Activated T-helper 1 cell treated with anti-CD3 and anti-CD28 coated beads, Interleukin-12 subunit alpha, Interleukin-12 subunit beta, Interleukin-2, Interleukin-4 antibody, amounts not matched to agents 30 ng/mL and 10 ng/mL and 1 ng/mL, durations not matched to agents 14 hours and 24 hours and 36 hours (primary cell): ENCODE measurements at regions of chr15 and their contacts with region 1.

Region 1: GRCh38 chr15:70512772-70513362 is 250.5 kb downstream of the UACA start:
- DNase-seq: peak; percentile 63
- H3K4me3 Mint-ChIP-seq: no peak overlapping the region
- H3K27ac Mint-ChIP-seq: no peak overlapping the region
- H3K4me1 Mint-ChIP-seq: peaks cover 23% of the 10 kb centered on the region
- H3K27me3 Mint-ChIP-seq: peaks cover 30% of the 10 kb centered on the region

Region 2: GRCh38 chr15:69475769-69476358 is 1037.0 kb before region 1 on chr15:
- intact Hi-C with region 1: loop called (anchors 5 kb)
- DNase-seq: peak; percentile 55
- H3K4me3 Mint-ChIP-seq: no peak overlapping the region
- H3K27ac Mint-ChIP-seq: no peak overlapping the region
- H3K4me1 Mint-ChIP-seq: no peaks in the 10 kb centered on the region
- H3K27me3 Mint-ChIP-seq: peaks cover 23% of the 10 kb centered on the region

Region 3: GRCh38 chr15:69523010-69524001 is 989.6 kb before region 1 on chr15:
- intact Hi-C with region 1: loop called (anchors 2 kb)
- DNase-seq: peak; percentile 49
- H3K4me3 Mint-ChIP-seq: no peak overlapping the region
- H3K27ac Mint-ChIP-seq: no peak overlapping the region
- H3K4me1 Mint-ChIP-seq: peaks cover 6% of the 10 kb centered on the region
- H3K27me3 Mint-ChIP-seq: peaks cover 16% of the 10 kb centered on the region

Region 4: DNA sequence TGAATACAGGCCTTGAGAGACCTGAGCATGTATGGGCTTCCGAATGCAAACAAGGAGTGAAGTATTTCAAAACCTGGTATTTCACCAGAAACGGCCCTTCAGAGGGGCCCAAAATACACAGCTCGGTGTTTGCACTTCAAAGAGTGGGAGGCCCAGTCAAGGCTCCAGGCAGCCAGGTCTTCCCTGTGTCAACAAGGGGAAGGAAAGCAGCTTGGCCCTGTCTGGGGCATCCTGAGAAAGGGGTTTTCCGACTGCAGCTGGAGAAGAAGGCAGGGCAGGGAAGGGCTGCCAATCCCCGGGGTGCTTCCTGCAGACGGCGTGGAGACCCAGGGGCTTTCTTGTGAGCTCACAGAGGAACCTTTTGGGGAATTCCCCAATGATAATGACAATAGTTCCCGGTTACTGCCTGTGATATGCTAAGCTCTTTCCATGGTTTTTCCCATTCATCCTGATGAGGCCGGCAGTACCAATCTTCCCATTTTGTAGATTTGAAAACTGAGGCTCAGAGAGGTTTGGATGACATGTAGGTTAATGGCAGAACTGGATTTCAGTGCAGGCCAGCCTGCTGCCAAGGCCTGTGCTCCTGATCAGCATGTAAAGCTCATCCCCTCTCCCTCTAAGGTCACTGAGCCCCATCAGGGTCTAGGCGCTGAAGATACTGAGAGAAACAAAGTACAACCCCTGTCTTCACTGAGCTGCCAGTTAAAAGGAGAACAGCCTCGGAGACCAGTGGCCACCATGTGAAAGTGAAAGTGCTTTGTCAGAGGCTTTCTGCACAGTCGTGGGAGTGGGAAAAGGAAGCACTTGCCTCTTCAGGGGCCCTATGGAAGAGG is 372.1 kb before region 1 on chr15:
- intact Hi-C with region 1: loop called (anchors 2 kb)
- DNase-seq: peak; percentile 8
- H3K4me3 Mint-ChIP-seq: peak overlapping the region; percentile 54
- H3K27ac Mint-ChIP-seq: peak overlapping the region; percentile 53
- H3K4me1 Mint-ChIP-seq: peaks cover 33% of the 10 kb centered on the region
- H3K27me3 Mint-ChIP-seq: peaks cover 28% of the 10 kb centered on the region

Region 5: DNA sequence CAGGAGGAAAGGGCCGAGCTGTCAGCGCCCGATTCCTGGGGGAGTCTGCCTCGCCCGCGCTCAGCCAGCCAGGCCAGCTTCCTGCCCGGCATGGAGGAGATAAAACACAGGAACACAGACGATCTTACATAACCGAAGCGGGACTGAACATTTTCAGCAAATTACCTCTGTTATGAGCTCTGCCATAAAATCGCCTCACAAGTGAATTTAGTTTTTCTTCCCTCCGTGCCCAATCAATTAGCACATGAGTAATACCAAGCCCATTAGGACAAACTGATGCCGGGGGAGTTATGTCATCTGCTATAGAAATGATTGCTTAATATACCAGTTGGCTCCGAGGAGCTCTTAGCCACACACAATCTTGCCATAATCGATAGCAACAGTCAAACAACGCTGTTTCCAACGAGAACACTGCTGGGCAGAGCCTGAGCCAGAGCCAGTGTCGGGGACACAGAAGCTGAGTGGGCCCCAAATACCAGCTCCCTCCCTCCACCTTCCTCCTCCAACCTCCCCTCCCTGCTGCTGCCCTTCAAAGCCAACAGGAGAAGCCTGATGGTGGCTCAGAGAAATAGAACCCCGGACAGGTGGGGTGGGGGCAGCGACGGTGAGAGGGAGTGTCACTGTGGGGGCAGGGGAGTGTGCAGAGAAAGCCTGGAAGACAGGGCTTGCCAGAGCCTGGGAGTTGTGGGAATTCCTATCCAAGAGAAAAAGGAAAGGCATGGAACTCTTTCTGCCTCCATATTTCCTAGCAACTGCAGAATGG is 135.8 kb before region 1 on chr15:
- intact Hi-C with region 1: no loop called
- DNase-seq: no peak
- H3K4me3 Mint-ChIP-seq: no peak overlapping the region
- H3K27ac Mint-ChIP-seq: no peak overlapping the region
- H3K4me1 Mint-ChIP-seq: no peaks in the 10 kb centered on the region
- H3K27me3 Mint-ChIP-seq: peaks cover 21% of the 10 kb centered on the region

Region 6: DNA sequence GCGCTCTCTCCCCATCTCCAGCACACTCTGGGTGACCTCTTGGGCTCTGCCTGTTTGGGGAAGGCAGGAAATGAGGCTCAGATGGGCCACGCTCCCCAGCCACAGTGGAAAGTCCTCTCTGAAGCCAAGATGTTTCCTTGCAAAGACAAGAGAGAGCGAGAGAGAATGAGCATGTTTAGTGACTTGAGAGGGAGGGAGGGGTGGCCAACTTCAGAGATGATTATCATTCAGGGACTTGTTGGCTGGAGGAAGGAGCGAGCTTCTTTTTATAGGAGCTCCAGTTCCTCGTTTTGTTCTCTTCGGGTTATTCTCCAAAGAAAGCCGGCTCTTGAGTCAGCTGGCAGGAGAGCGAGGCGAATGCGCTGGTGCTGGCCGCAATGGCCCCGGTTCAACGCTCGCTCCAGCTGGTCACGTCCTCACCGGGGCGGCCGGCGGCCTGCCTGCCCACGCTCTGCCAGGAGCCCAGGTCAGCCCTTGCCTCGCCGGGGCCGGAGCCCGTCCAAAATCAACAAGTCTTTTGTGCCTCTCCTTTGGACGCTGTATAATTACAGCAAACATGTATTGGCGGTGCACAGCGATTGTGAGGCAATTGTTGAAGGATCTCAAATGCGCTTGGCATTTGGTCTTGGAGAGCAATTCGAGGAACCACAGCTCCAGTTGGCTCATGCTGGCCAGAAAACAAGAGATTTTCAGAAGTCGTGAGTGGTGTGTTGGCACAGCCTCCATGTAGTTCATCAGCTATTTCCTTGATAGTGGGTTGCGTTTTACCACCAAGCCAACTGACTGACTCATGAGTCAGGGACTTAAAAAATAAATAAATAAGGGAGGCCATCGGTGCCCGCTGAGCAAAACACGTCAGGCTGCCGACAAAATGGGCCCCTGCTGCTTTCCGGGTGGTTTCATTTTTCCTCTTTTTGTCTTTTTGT is 38.1 kb before region 1 on chr15:
- intact Hi-C with region 1: loop called (anchors 5 kb)
- DNase-seq: no peak
- H3K4me3 Mint-ChIP-seq: peak overlapping the region; percentile 58
- H3K27ac Mint-ChIP-seq: peak overlapping the region; percentile 40
- H3K4me1 Mint-ChIP-seq: peaks cover 56% of the 10 kb centered on the region
- H3K27me3 Mint-ChIP-seq: peaks cover 65% of the 10 kb centered on the region

Region 7: GRCh38 chr15:70528270-70528706 is 15.4 kb after region 1 on chr15:
- intact Hi-C with region 1: loop called (anchors 1 kb)
- DNase-seq: peak; percentile 60
- H3K4me3 Mint-ChIP-seq: peak overlapping the region; percentile 27
- H3K27ac Mint-ChIP-seq: peak overlapping the region; percentile 50
- H3K4me1 Mint-ChIP-seq: peaks cover 32% of the 10 kb centered on the region
- H3K27me3 Mint-ChIP-seq: peaks cover 11% of the 10 kb centered on the region